WTC11 (cell line): ENCODE measurements at regions of chr7 and their contacts with region 1.

Region 1: GRCh38 chr7:51162724-51163329 is 153.8 kb downstream of the COBL start:
- DNase-seq: peak; percentile 91
- ATAC-seq: peak; percentile 91
- H3K4me3 Mint-ChIP-seq: no peak overlapping the region
- H3K27ac Mint-ChIP-seq: peak overlapping the region; percentile 15; the same call in 1 of the 2 replicates
- H3K4me1 Mint-ChIP-seq: peaks cover 25% of the 10 kb centered on the region
- H3K27me3 Mint-ChIP-seq: no peaks in the 10 kb centered on the region
- CTCF ChIP-seq: peak; percentile 81

Region 2: GRCh38 chr7:50092579-50093491 is 1070.0 kb before region 1 on chr7 and contains the start of gene ZPBP:
- CTCF ChIA-PET with region 1: interaction called, 12 read pairs
- POLR2A ChIA-PET with region 1: no interaction called
- DNase-seq: peak; percentile 41
- ATAC-seq: peak; percentile 82
- H3K4me3 Mint-ChIP-seq: peak within 1 kb of the TSS; percentile 77
- H3K27ac Mint-ChIP-seq: peak within 1 kb of the TSS; percentile 33; the same call in 1 of the 2 replicates
- H3K4me1 Mint-ChIP-seq: peaks cover 3% of the 10 kb centered on the region
- H3K27me3 Mint-ChIP-seq: peaks cover 15% of the 10 kb centered on the region
- CTCF ChIP-seq: peak; percentile 77
- total RNA-seq, gene ZPBP: not detected in 3 replicates

Region 3: DNA sequence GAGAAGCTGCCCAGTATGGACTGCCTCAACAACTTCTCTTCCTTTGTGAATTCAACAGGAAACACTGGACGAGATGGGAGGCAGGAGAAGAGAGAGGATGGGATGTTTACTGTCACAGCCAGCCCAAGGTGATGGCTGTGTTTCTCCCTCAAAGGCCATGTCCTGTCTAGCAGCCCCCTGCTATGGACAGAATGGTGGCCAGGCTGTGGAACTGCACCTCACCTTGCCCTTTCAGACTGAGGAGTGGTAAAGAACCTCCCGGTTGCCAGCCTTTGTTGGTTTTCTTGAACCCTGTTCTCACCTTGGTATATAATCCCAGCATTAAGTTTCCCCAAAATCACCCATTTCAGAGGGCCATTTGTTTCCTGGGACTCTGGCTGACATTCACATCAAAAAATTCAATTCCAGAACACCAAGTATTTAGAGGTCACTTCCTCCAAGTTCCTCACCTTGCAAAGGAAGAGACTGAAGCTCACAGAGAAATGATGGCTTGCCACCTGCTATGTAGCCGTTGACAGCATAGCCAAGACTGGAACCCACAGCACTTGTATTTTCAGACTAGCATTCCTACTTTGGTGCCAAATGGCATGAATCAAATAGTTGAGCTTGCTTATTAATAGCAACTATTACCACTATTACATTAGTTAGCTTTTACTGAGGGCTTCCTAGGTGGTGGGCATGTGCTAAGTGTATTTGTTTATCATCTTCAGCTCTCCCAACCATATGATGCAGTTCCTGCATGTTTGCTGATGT is 156.2 kb before region 1 on chr7:
- CTCF ChIA-PET with region 1: interaction called, 13 read pairs
- POLR2A ChIA-PET with region 1: no interaction called
- DNase-seq: no peak
- ATAC-seq: peak; percentile 78
- H3K4me3 Mint-ChIP-seq: no peak overlapping the region
- H3K27ac Mint-ChIP-seq: no peak overlapping the region
- H3K4me1 Mint-ChIP-seq: no peaks in the 10 kb centered on the region
- H3K27me3 Mint-ChIP-seq: no peaks in the 10 kb centered on the region
- CTCF ChIP-seq: no peak

Region 4: DNA sequence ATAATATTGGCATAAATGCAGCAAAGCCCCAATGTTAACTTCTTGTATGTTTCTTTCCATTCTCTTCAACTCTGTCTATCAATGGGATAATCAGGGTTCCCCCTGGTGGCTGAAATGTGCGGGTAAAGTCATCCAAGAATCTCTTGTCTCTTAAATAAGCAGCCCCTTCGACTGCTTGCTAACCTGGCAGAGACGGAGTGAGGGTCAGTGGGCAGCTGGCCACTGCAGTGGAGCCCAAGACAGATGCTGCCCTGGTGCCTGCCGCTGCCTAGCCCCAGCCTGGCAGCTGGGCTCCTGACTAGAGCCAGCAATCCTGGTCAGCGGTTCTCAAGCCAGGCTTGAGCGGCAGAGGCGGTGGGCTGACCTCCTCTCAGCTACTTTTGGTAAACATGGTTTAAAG is 95.1 kb before region 1 on chr7:
- CTCF ChIA-PET with region 1: interaction called, 23 read pairs
- POLR2A ChIA-PET with region 1: no interaction called
- DNase-seq: peak; percentile 83
- ATAC-seq: peak; percentile 90
- H3K4me3 Mint-ChIP-seq: no peak overlapping the region
- H3K27ac Mint-ChIP-seq: no peak overlapping the region
- H3K4me1 Mint-ChIP-seq: peaks cover 13% of the 10 kb centered on the region
- H3K27me3 Mint-ChIP-seq: no peaks in the 10 kb centered on the region
- CTCF ChIP-seq: no peak; the same call in none of the 2 replicates

Region 5: GRCh38 chr7:51182636-51183166 is 19.9 kb after region 1 on chr7:
- CTCF ChIA-PET with region 1: interaction called, 71 read pairs
- POLR2A ChIA-PET with region 1: no interaction called
- DNase-seq: no peak
- ATAC-seq: no peak
- H3K4me3 Mint-ChIP-seq: no peak overlapping the region
- H3K27ac Mint-ChIP-seq: peak overlapping the region; percentile 68
- H3K4me1 Mint-ChIP-seq: peaks cover 16% of the 10 kb centered on the region
- H3K27me3 Mint-ChIP-seq: no peaks in the 10 kb centered on the region
- CTCF ChIP-seq: no peak

Region 6: GRCh38 chr7:51324206-51324884 is 161.5 kb after region 1 on chr7:
- CTCF ChIA-PET with region 1: interaction called, 21 read pairs
- POLR2A ChIA-PET with region 1: no interaction called
- DNase-seq: no peak
- ATAC-seq: no peak
- H3K4me3 Mint-ChIP-seq: no peak overlapping the region
- H3K27ac Mint-ChIP-seq: peak overlapping the region; percentile 37
- H3K4me1 Mint-ChIP-seq: peaks cover 82% of the 10 kb centered on the region
- H3K27me3 Mint-ChIP-seq: peaks cover 32% of the 10 kb centered on the region
- CTCF ChIP-seq: no peak

Region 7: GRCh38 chr7:51376420-51377092 is 213.7 kb after region 1 on chr7:
- CTCF ChIA-PET with region 1: interaction called, 234 read pairs
- POLR2A ChIA-PET with region 1: no interaction called
- DNase-seq: no peak
- ATAC-seq: no peak
- H3K4me3 Mint-ChIP-seq: no peak overlapping the region
- H3K27ac Mint-ChIP-seq: no peak overlapping the region
- H3K4me1 Mint-ChIP-seq: peaks cover 2% of the 10 kb centered on the region; the same call in 1 of the 2 replicates
- H3K27me3 Mint-ChIP-seq: no peaks in the 10 kb centered on the region
- CTCF ChIP-seq: no peak

Region 8: GRCh38 chr7:51593628-51594027 is 430.8 kb after region 1 on chr7:
- CTCF ChIA-PET with region 1: no interaction called
- POLR2A ChIA-PET with region 1: no interaction called
- DNase-seq: no peak
- ATAC-seq: no peak
- H3K4me3 Mint-ChIP-seq: no peak overlapping the region
- H3K27ac Mint-ChIP-seq: no peak overlapping the region
- H3K4me1 Mint-ChIP-seq: peaks cover 13% of the 10 kb centered on the region
- H3K27me3 Mint-ChIP-seq: peaks cover under 1% of the 10 kb centered on the region; the same call in 1 of the 2 replicates
- CTCF ChIP-seq: no peak